Activated B cell treated with CpG ODN at 0.5 μM for 24 hours (primary cell): ENCODE measurements at regions of chr2 and their contacts with region 1.

Region 1: DNA sequence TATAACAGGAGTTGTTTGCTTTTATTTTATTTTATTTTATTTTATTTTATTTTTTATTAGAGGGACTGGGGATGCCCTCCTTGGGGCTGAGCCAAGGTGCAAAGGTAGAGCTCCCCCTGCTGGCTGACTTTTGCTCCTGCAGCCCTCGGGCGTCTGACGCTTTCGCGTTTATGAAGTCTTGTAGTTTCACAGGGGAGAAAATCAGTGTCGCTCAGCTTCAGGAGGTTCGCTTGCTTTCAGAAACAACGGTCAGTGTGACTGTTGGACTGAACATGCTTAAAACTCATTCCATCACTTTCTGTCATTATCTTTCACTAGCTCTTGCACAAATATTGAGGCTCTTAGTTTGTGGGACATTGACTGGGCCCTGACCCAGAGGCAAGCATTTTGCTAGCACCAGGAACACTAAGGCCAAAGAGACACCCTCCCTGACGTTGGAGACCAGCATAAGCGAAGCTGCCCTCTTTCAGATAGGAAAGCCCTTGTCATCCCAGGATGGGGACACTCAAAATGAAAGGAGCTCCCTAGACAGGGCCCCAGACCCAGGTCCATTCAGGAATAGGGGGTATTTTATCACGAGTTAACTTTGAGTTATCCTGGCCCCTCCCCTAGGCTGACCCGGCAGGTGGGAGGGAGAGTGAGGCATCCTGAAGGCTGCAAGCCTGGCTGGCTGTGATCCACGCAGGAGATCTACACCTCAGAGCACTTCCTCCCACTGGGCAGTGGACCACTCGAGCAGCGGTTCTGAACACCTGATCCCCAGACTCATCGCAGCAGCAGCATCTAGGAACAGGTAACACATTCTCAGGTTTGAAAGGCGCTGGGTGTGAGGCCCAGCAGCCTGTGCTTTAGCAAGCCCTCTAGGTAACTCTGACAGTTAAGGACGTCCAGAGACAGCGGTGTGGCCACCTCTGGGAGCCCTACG is 34.4 kb downstream of the LGALSL start:
- DNase-seq: peak; percentile 65
- ATAC-seq: peak; percentile 90
- H3K4me3 Mint-ChIP-seq: no peak overlapping the region
- H3K27ac Mint-ChIP-seq: no peak overlapping the region
- H3K4me1 Mint-ChIP-seq: peaks cover 4% of the 10 kb centered on the region
- H3K27me3 Mint-ChIP-seq: peaks cover 6% of the 10 kb centered on the region
- CTCF ChIP-seq: peak; percentile 56

Region 2: DNA sequence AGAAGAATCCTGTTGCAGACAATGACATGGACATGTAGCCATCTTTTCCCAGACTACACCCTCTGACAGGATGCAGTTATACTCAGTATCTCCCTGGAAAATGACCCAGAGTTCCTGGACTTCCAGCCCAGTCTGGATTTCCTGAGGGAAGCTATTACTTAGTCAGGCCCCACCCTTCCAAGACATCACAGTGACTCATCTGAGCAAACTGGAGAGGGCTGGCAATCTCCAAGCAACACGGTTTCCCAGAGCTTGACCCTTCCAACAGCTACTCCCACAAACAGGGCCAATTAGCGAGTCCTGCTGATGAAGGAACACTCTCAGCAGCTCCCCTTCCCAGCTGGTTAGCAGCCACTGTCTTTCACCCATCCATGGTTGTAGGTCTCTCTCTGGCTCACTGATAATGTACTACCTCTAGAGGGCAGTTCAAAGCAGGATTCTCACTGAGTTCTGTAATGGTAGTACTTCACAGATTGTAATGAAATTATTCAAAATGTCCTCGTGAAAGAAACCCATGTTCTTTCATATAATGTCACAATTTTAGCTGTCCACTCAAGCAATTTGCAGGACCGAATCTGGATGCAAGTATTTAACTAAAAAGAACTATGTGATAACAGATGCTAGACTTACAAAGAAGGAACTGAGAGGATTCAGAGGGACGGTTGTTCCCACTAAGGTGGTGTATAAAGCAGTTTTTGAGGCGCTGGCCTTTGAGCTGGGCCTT is 789.3 kb before region 1 on chr2:
- CTCF ChIA-PET with region 1: no interaction called
- POLR2A ChIA-PET with region 1: no interaction called
- intact Hi-C with region 1: loop called (anchors 10 kb)
- DNase-seq: no peak
- ATAC-seq: peak; percentile 64
- H3K4me3 Mint-ChIP-seq: no peak overlapping the region
- H3K27ac Mint-ChIP-seq: no peak overlapping the region
- H3K4me1 Mint-ChIP-seq: no peaks in the 10 kb centered on the region
- H3K27me3 Mint-ChIP-seq: no peaks in the 10 kb centered on the region
- CTCF ChIP-seq: no peak

Region 3: GRCh38 chr2:64453770-64454385 is 34.4 kb before region 1 on chr2 and contains the start of gene LGALSL:
- CTCF ChIA-PET with region 1: interaction called, 3 read pairs
- POLR2A ChIA-PET with region 1: no interaction called
- intact Hi-C with region 1: loop called (anchors 2 kb)
- DNase-seq: peak; percentile 57
- ATAC-seq: peak; percentile 69
- H3K4me3 Mint-ChIP-seq: peak within 1 kb of the TSS; percentile 86
- H3K27ac Mint-ChIP-seq: peak within 1 kb of the TSS; percentile 75
- H3K4me1 Mint-ChIP-seq: peaks cover 9% of the 10 kb centered on the region
- H3K27me3 Mint-ChIP-seq: no peaks in the 10 kb centered on the region
- CTCF ChIP-seq: no peak
- total RNA-seq, gene LGALSL: 1.5 and 2.2 TPM in 2 replicates

Region 4: DNA sequence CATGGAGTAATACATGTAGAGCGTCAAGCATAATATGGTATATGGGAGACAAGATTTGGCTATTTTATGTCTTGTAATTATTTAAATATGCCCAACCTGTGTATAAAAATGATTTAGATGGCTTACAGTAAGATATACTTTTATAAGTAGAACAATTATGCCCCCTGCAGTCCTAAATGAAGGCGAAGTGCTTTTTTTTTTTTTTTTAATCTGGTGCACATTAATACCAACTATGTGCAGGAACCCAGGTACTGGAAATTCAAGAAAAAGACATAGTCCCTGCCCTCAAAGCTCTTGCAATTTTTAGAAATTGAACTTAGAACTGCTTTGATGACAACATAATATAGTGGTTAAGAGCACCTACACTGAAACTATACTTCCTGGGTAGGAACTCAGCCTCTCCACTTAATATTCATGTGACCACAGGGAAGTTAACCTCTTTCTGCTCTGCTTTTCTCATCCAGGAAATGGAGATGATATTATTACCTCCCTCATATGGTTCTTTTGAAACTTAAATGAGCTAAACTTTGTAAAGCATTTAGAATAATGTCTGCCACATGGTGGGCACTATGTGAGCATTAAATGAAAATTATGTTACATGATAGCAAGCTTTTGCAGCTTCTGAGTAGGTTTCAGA is 74.0 kb after region 1 on chr2:
- CTCF ChIA-PET with region 1: interaction called, 6 read pairs
- POLR2A ChIA-PET with region 1: no interaction called
- intact Hi-C with region 1: loop called (anchors 1 kb)
- DNase-seq: no peak
- ATAC-seq: peak; percentile 52
- H3K4me3 Mint-ChIP-seq: no peak overlapping the region
- H3K27ac Mint-ChIP-seq: no peak overlapping the region
- H3K4me1 Mint-ChIP-seq: peaks cover 34% of the 10 kb centered on the region
- H3K27me3 Mint-ChIP-seq: no peaks in the 10 kb centered on the region
- CTCF ChIP-seq: no peak

Region 5: DNA sequence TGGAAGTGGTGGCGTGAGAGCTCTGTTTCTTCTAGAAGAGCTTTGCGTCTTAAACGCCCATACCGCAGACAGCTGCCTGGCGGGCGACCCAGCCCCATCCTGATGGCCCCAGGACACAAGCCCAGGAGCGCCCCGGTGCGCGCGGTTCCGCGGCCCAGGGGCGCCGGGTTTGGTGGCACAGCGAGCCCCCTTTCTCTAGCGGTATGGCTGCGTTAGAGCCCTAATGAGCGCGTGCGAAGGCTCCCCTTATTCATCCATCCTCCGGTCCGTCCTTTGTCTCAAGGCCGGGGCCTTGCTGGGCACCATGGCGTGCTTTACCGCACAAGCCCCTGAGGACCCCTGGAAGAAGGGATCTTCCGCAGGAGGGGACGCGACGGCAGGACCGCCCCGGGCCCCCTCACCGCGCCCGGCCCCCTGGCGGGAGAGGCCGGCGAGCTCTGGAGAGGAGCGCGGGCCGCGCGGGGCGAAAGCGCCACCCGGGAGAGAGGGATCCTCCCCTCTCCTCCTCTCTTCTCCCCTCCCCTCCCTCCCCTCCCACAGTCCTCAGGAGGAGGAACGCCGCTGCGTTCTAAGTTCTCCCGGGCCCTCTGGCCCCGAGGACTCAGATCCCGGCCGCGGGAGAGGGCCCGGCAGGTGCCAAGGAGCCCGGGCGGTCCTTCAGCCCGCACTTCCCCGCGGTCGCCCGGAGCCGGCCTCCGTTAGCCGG is 500.3 kb after region 1 on chr2:
- CTCF ChIA-PET with region 1: no interaction called
- POLR2A ChIA-PET with region 1: no interaction called
- intact Hi-C with region 1: no loop called
- DNase-seq: peak; percentile 62
- ATAC-seq: peak; percentile 43
- H3K4me3 Mint-ChIP-seq: peak overlapping the region; percentile 85
- H3K27ac Mint-ChIP-seq: peak overlapping the region; percentile 87
- H3K4me1 Mint-ChIP-seq: peaks cover 40% of the 10 kb centered on the region
- H3K27me3 Mint-ChIP-seq: no peaks in the 10 kb centered on the region
- CTCF ChIP-seq: no peak